Caco-2 (cell line): ENCODE measurements at regions of chr12 and their contacts with region 1.

Region 1: DNA sequence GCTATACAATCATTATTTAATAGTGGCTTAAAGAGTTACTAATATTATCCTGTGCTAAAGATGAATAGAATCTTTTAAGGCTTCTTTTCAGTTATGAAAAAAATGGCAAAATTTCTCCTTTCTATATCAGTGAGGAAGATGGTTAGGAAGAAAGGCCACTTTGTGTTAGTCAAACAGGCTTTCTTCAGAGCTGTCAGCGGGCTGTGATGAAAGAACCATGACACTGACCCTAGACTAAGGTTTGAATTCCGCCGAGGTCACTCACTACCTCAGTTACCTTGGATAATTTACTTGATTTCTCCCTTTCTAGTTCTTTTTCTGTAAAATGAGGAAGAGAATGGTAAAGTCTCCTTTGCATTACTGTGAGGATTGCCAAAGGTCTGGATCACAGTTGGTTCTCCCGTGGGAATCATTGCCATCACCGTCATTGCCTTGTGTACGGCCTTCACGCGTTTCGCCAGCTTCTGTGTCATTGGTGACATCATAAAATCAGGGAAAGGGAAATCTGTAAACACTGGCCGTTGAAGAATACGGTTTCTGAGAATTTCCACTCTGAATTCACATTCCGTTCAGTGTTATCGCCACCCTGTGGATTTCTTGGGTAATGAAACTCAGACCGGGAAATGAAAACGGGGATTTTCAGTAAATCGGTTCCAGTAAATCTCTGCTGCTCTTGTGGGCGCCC is 26.7 kb upstream of the YBX3 start:
- DNase-seq: peak; percentile 87 to 91
- H3K4me3 ChIP-seq: peak overlapping the region; percentile 24
- H3K4me3 Mint-ChIP-seq: peak overlapping the region; percentile 70
- H3K27ac Mint-ChIP-seq: no peak overlapping the region
- H3K4me1 ChIP-seq: no peaks in the 10 kb centered on the region; the same call in 1 of the 2 replicates
- H3K4me1 Mint-ChIP-seq: peaks cover 6% of the 10 kb centered on the region
- H3K27me3 ChIP-seq: no peaks in the 10 kb centered on the region
- H3K27me3 Mint-ChIP-seq: peaks cover 9% of the 10 kb centered on the region
- CTCF ChIP-seq: peak; percentile 96 to 99

Region 2: DNA sequence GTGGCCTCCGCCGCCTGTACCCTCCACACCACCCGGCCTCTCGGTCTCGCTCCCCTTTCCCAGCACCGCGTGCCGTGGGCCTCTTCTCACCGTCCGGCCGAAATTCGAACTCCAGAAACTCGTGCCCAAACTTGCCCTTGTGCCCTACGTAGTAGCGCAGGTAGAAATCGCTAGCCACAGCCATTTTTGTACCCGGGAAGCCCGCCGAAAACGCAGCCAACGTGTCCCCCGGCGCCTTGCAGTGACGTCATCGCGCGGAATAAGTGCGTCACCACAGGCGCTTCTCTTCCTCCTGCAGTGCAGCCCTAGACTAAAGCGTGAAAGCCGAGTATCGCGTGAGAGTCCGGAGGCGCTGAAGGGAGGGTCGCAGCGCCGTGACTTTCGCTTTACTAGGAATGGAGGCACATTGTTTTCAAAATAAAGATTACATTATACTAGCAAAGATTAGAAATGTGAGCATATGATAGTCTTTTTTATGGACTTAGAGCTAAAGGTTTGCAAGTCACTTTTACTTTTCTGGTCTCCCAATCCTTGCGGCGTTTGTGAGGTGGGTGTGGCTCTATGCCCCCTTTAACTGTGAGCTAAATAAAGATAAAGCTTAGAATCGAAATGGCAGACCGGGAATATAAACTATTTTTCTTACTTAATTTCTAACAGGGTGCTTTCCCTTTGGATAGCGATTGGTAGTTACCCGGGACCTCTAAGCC is 136.3 kb before region 1 on chr12 and contains the start of gene MAGOHB:
- CTCF ChIA-PET with region 1: no interaction called
- POLR2A ChIA-PET with region 1: interaction called, 3 read pairs
- intact Hi-C with region 1: loop called (anchors 2 kb)
- DNase-seq: peak; percentile 99 to 100
- H3K4me3 ChIP-seq: peak within 1 kb of the TSS; percentile 90
- H3K4me3 Mint-ChIP-seq: peak within 1 kb of the TSS; percentile 100
- H3K27ac Mint-ChIP-seq: peak within 1 kb of the TSS; percentile 100
- H3K4me1 ChIP-seq: peaks cover 5% of the 10 kb centered on the region; the same call in 1 of the 2 replicates
- H3K4me1 Mint-ChIP-seq: peaks cover 20% of the 10 kb centered on the region
- H3K27me3 ChIP-seq: no peaks in the 10 kb centered on the region
- H3K27me3 Mint-ChIP-seq: no peaks in the 10 kb centered on the region
- CTCF ChIP-seq: no peak
- total RNA-seq, gene MAGOHB: 134 and 137 TPM in 2 replicates

Region 3: DNA sequence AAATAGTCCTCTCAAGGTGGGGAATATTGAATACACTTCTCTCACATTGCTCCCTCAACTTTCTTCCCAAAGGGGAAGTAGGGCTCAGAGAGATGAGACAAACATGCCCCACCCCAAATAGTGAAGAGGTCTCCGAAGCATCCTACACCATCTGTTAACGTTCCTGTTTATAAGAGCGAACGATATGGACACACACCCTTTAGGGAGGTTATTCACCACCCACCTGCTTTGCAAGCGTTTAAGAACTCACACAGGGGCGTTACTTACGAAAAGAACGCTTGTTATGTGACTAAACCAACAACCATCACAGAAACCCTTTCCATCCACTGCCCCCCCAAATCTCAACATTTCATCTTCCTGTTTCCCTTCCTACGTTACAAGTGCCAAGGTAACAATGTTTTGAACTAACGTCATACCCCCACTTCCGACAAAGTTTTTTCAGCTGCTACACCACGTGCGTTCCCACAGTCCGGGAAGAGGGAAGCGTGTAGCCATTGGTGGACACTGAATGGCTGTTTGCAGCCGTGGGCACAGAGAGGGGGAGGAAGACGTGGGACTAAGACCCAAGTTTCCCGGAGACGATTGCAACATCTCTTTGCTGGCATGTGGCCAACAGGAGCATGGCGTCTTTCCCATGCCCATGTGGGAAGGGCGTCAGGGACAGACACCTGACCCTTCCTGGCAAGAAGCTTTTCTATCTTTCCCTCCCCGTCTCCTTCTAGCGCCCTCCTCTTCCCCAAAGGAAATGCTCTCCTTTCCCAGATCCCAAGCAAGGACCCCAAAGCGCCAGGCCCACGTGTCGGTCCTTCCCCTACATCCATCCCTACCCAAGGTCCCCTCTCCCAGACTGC is 28.0 kb before region 1 on chr12:
- CTCF ChIA-PET with region 1: interaction called, 5 read pairs
- POLR2A ChIA-PET with region 1: no interaction called
- intact Hi-C with region 1: loop called (anchors 1 kb)
- DNase-seq: peak; percentile 81 to 89
- H3K4me3 ChIP-seq: peak overlapping the region; percentile 95
- H3K4me3 Mint-ChIP-seq: peak overlapping the region; percentile 87
- H3K27ac Mint-ChIP-seq: peak overlapping the region; percentile 96
- H3K4me1 ChIP-seq: peaks cover 46% of the 10 kb centered on the region
- H3K4me1 Mint-ChIP-seq: peaks cover 48% of the 10 kb centered on the region
- H3K27me3 ChIP-seq: no peaks in the 10 kb centered on the region
- H3K27me3 Mint-ChIP-seq: peaks cover 4% of the 10 kb centered on the region
- CTCF ChIP-seq: no peak

Region 4: DNA sequence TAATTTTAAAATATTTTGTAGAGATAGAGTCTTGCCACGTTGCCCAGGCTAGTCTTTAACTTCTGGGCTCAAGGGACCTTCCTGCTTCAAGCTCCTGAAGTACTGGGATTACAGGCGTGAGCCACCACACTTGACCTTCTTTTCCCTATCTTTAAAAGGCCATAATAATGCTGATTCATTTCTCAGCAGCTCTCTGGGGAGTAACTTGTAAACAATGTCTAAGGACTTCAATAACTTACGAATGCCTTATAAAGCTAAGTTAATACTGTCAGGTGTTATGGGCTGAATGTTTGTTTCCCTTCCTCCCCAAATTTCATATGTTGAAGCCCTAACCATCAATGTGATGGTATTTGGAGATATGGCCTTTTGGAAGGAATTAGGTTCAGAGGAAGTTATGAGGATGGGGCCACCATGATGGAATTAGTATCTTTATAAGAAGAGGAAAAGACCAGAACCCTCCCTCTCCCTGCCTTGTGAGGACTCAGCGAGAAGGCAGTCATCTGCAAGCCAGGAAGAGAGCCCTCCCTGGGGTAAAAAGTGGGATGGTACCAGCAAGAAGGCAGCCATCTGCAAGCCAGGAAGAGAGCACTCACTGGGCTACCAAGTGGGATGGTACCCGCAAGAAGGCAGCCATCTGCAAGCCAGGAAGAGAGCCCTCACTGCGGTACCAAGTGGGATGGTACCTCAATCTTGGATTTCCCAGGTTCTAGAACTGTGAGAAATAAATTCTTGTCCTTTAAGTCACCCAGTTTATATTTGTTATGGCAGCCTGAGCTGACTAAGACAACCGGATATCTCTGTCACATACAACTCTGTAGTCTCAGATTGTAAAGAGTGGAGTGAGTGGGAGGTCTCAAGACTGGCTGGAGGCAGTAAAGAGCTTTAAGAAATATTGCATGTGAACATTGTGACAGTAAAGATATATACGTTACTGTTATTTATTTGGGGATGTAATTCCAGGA is 10.4 kb before region 1 on chr12:
- CTCF ChIA-PET with region 1: interaction called, 6 read pairs
- POLR2A ChIA-PET with region 1: no interaction called
- intact Hi-C with region 1: loop called (anchors 1 kb)
- DNase-seq: no peak
- H3K4me3 ChIP-seq: no peak overlapping the region
- H3K4me3 Mint-ChIP-seq: no peak overlapping the region
- H3K27ac Mint-ChIP-seq: peak overlapping the region; percentile 68
- H3K4me1 ChIP-seq: peaks cover 19% of the 10 kb centered on the region
- H3K4me1 Mint-ChIP-seq: peaks cover 26% of the 10 kb centered on the region
- H3K27me3 ChIP-seq: no peaks in the 10 kb centered on the region
- H3K27me3 Mint-ChIP-seq: no peaks in the 10 kb centered on the region
- CTCF ChIP-seq: no peak